ENCODE measurements at regions of chr2 and their contacts with region 1.

Region 1: DNA sequence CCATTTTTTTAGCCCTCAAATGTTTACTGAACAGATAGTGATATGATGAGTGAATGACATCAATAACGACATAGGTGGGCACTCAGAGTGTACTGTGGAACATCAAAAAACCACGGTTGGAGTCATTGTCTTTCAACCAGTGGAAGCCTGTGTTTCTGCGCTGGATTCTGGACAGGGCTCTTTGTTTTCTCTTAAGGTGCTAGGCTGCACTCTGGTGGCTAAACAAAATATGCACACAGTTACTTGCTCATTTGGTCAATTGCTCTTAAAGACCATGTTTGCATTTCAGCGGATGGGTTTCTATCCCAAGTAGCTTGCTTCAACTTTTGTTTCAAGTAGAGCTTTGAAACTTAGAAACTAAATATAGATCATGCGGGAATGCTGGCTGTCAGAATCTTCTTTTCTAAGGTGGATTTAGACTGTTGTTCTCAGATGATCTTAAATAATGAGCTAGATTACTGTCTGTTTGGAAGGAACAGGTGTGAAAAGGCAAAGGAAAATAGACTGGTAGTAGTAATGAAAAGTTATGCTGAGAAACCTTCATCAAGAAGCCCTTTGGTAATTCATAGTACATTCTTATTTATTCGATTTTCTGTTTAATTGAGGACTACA is 48.5 kb upstream of the LYPD6B start:
- DNase-seq: peak; percentile 74
- ATAC-seq: peak; percentile 98
- H3K4me3 ChIP-seq: no peak overlapping the region
- H3K27ac ChIP-seq: no peak overlapping the region
- H3K4me1 ChIP-seq: no peaks in the 10 kb centered on the region
- H3K27me3 ChIP-seq: no peaks in the 10 kb centered on the region
- CTCF ChIP-seq: peak; percentile 68 to 84 (median 82)
- POLR2A ChIP-seq: no peak
- RAD21 ChIP-seq: peak; percentile 89

Region 2: GRCh38 chr2:147937744-147938349 is 1052.1 kb before region 1 on chr2:
- CTCF ChIA-PET with region 1: no interaction called
- POLR2A ChIA-PET with region 1: no interaction called
- RAD21 ChIA-PET with region 1: no interaction called
- intact Hi-C with region 1: loop called (anchors 1 kb)
- DNase-seq: peak; percentile 7
- ATAC-seq: peak; percentile 61; the same call in 1 of the 2 replicates
- H3K4me3 ChIP-seq: no peak overlapping the region
- H3K27ac ChIP-seq: no peak overlapping the region
- H3K4me1 ChIP-seq: no peaks in the 10 kb centered on the region
- H3K27me3 ChIP-seq: no peaks in the 10 kb centered on the region
- CTCF ChIP-seq: peak; percentile 49 to 78 (median 76)
- POLR2A ChIP-seq: no peak
- RAD21 ChIP-seq: peak; percentile 78

Region 3: GRCh38 chr2:147989809-147990403 is 1000.1 kb before region 1 on chr2:
- CTCF ChIA-PET with region 1: no interaction called
- POLR2A ChIA-PET with region 1: no interaction called
- RAD21 ChIA-PET with region 1: no interaction called
- intact Hi-C with region 1: loop called (anchors 1 kb)
- DNase-seq: peak; percentile 18
- ATAC-seq: peak; percentile 73
- H3K4me3 ChIP-seq: no peak overlapping the region
- H3K27ac ChIP-seq: no peak overlapping the region
- H3K4me1 ChIP-seq: no peaks in the 10 kb centered on the region
- H3K27me3 ChIP-seq: no peaks in the 10 kb centered on the region
- CTCF ChIP-seq: peak; percentile 44 to 98 (median 79)
- POLR2A ChIP-seq: no peak
- RAD21 ChIP-seq: peak; percentile 86

Region 4: DNA sequence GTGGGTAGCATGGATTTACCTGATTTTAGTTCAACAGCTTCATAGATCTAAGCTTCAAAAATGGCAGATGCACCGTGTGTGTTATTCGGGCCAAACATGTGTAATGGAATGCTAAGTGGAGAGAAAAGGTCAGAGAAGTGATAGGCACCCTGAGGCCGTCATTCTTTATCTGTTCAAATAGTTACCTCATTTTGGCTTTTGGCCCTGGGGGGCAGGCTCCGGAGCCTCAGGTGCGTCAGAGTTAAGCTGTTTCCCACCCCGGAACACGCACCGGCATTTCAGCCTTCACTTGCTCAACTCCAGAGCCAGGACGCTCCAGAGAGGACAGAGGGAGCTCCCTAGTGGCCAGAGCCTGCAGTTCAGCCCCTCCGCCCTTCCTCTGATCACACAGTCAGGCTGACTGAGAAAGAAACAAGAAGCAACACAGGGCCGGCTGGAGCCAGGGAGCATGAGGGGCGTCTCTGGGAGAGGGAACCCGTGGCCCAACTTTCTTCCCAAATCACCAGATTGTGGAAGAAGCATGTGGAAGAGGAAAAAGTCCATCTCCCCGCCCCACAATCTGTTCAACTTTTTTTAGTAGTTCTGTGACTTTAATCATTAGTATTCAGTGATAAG is 480.6 kb before region 1 on chr2:
- CTCF ChIA-PET with region 1: interaction called, 7 read pairs
- POLR2A ChIA-PET with region 1: no interaction called
- RAD21 ChIA-PET with region 1: no interaction called
- intact Hi-C with region 1: loop called (anchors 5 kb)
- DNase-seq: peak; percentile 74
- ATAC-seq: peak; percentile 100
- H3K4me3 ChIP-seq: peak overlapping the region; percentile 14 to 27; a peak in 3 of 4 replicates
- H3K27ac ChIP-seq: no peak overlapping the region
- H3K4me1 ChIP-seq: peaks cover 0 to 10% of the 10 kb centered on the region in 2 experiments; a peak in 2 of 4 replicates
- H3K27me3 ChIP-seq: no peaks in the 10 kb centered on the region
- CTCF ChIP-seq: peak; percentile 81 to 94 (median 91)
- POLR2A ChIP-seq: no peak
- RAD21 ChIP-seq: peak; percentile 91

Region 5: DNA sequence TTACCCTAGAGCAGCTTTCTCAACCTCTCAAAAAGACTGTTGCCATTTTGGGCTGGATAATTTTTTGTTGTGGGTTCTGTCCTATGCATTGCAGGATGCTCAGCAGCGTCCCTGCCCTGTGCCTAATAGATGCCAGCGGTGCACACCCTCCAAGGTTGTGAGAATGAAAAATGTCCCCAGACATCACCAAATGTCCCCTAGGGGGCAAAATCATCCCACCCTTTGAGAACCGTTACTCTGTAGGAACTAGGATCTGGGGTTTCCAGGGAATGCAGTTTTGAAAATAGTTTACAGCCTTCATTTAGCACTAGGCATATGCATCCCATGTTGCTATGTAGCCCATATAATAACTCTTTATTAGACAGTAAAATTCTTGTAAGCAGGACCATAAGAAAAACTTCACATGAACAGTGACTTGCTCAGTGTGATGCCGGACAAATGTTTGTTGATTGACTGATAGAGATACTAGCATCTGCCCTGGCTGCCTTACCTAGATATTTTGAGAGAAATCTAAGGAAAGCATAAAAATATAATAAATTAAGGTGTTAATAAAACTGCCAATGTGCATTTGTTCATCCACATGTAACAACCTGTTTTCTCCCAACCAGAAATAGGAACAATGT is 424.6 kb before region 1 on chr2:
- CTCF ChIA-PET with region 1: no interaction called
- POLR2A ChIA-PET with region 1: no interaction called
- RAD21 ChIA-PET with region 1: no interaction called
- intact Hi-C with region 1: loop called (anchors 5 kb)
- DNase-seq: no peak
- ATAC-seq: peak; percentile 74
- H3K4me3 ChIP-seq: no peak overlapping the region
- H3K27ac ChIP-seq: no peak overlapping the region
- H3K4me1 ChIP-seq: no peaks in the 10 kb centered on the region
- H3K27me3 ChIP-seq: no peaks in the 10 kb centered on the region
- CTCF ChIP-seq: peak in 2 of 3 experiments; percentile 41 to 45; a peak in 5 of 6 replicates
- POLR2A ChIP-seq: no peak
- RAD21 ChIP-seq: peak; percentile 69

Region 6: GRCh38 chr2:148644883-148645538 is 345.0 kb before region 1 on chr2:
- CTCF ChIA-PET with region 1: interaction called, 3 read pairs
- POLR2A ChIA-PET with region 1: no interaction called
- RAD21 ChIA-PET with region 1: no interaction called
- intact Hi-C with region 1: loop called (anchors 5 kb)
- DNase-seq: peak; percentile 75
- ATAC-seq: peak; percentile 85
- H3K4me3 ChIP-seq: peak overlapping the region; percentile 77 to 97
- H3K27ac ChIP-seq: peak overlapping the region; percentile 55
- H3K4me1 ChIP-seq: peaks cover 26 to 33% of the 10 kb centered on the region in 2 experiments
- H3K27me3 ChIP-seq: no peaks in the 10 kb centered on the region
- CTCF ChIP-seq: no peak
- POLR2A ChIP-seq: peak; percentile 20
- RAD21 ChIP-seq: no peak

Region 7: GRCh38 chr2:148802448-148803220 is 187.4 kb before region 1 on chr2:
- CTCF ChIA-PET with region 1: no interaction called
- POLR2A ChIA-PET with region 1: no interaction called
- RAD21 ChIA-PET with region 1: no interaction called
- intact Hi-C with region 1: no loop called
- DNase-seq: no peak
- ATAC-seq: no peak
- H3K4me3 ChIP-seq: no peak overlapping the region
- H3K27ac ChIP-seq: no peak overlapping the region
- H3K4me1 ChIP-seq: no peaks in the 10 kb centered on the region
- H3K27me3 ChIP-seq: no peaks in the 10 kb centered on the region
- CTCF ChIP-seq: no peak
- POLR2A ChIP-seq: no peak
- RAD21 ChIP-seq: no peak

Region 8: GRCh38 chr2:148926291-148926961 is 63.6 kb before region 1 on chr2:
- CTCF ChIA-PET with region 1: interaction called, 3 read pairs
- POLR2A ChIA-PET with region 1: no interaction called
- RAD21 ChIA-PET with region 1: no interaction called
- intact Hi-C with region 1: loop called (anchors 5 kb)
- DNase-seq: peak; percentile 33
- ATAC-seq: peak; percentile 84
- H3K4me3 ChIP-seq: peak overlapping the region; percentile 55 to 62
- H3K27ac ChIP-seq: peak overlapping the region; percentile 58
- H3K4me1 ChIP-seq: peaks cover 7 to 17% of the 10 kb centered on the region in 2 experiments
- H3K27me3 ChIP-seq: no peaks in the 10 kb centered on the region
- CTCF ChIP-seq: peak; percentile 50 to 91 (median 82); a peak in 5 of 6 replicates
- POLR2A ChIP-seq: no peak
- RAD21 ChIP-seq: peak; percentile 61